BJ (cell line): ENCODE measurements at regions of chr17 and their contacts with region 1.

Region 1: GRCh38 chr17:80008383-80008840 is 27.3 kb downstream of the TBC1D16 start:
- DNase-seq: no peak
- H3K4me3 ChIP-seq: no peak overlapping the region
- H3K27me3 ChIP-seq: no peaks in the 10 kb centered on the region
- CTCF ChIP-seq: peak; percentile 97

Region 2: GRCh38 chr17:79777894-79778503 is 230.4 kb before region 1 on chr17 and contains the start of gene CBX2:
- CTCF ChIA-PET with region 1: no interaction called
- POLR2A ChIA-PET with region 1: no interaction called
- DNase-seq: no peak
- H3K4me3 ChIP-seq: peak within 1 kb of the TSS; percentile 61
- H3K27me3 ChIP-seq: peaks cover 23% of the 10 kb centered on the region
- CTCF ChIP-seq: no peak
- polyA plus RNA-seq, gene CBX2: 0.74 and 1.5 TPM in 2 replicates

Region 3: GRCh38 chr17:79991140-79991923 is 17.1 kb before region 1 on chr17:
- CTCF ChIA-PET with region 1: interaction called, 21 read pairs
- POLR2A ChIA-PET with region 1: no interaction called
- DNase-seq: no peak
- H3K4me3 ChIP-seq: peak overlapping the region; percentile 36
- H3K27me3 ChIP-seq: no peaks in the 10 kb centered on the region
- CTCF ChIP-seq: peak; percentile 71

Region 4: GRCh38 chr17:80018917-80019651 is 10.7 kb after region 1 on chr17:
- CTCF ChIA-PET with region 1: interaction called, 47 read pairs
- POLR2A ChIA-PET with region 1: no interaction called
- DNase-seq: no peak
- H3K4me3 ChIP-seq: no peak overlapping the region
- H3K27me3 ChIP-seq: no peaks in the 10 kb centered on the region
- CTCF ChIP-seq: no peak

Region 5: GRCh38 chr17:80034791-80035692 is 26.6 kb after region 1 on chr17:
- CTCF ChIA-PET with region 1: interaction called, 51 read pairs
- POLR2A ChIA-PET with region 1: no interaction called
- DNase-seq: no peak
- H3K4me3 ChIP-seq: peak overlapping the region; percentile 98
- H3K27me3 ChIP-seq: no peaks in the 10 kb centered on the region
- CTCF ChIP-seq: no peak

Region 6: DNA sequence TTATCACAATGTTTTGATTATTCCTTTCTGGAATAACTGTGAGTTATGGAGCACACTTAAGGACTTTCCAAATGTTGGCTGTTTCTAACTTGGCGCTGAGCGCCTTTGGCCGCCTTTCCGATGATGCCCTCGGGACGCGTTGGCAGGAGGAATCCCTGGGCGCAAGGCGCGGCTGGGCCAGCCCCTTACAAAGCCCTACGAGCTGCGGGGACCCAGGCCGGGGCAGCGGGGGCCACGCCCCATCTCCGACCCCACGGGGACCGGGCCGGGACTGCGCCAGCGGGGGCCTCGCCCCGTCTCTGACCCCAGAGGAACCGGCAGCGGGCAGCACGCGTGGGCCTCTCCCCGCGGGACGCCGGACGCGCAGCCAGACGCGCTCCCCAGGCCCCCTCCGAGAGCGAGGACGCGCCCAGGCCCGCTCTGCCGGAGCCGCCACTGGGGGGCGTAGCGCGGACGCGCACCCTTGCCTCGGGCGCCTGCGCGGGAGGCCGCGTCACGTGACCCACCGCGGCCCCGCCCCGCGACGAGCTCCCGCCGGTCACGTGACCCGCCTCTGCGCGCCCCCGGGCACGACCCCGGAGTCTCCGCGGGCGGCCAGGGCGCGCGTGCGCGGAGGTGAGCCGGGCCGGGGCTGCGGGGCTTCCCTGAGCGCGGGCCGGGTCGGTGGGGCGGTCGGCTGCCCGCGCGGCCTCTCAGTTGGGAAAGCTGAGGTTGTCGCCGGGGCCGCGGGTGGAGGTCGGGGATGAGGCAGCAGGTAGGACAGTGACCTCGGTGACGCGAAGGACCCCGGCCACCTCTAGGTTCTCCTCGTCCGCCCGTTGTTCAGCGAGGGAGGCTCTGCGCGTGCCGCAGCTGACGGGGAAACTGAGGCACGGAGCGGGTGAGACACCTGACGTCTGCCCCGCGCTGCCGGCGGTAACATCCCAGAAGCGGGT is 92.9 kb after region 1 on chr17 and contains the start of gene GAA:
- CTCF ChIA-PET with region 1: interaction called, 10 read pairs
- POLR2A ChIA-PET with region 1: no interaction called
- DNase-seq: no peak
- H3K4me3 ChIP-seq: peak within 1 kb of the TSS; percentile 81
- H3K27me3 ChIP-seq: no peaks in the 10 kb centered on the region
- CTCF ChIP-seq: peak; percentile 38
- polyA plus RNA-seq, gene GAA: 3.3 and 5.7 TPM in 2 replicates